ENCODE measurements at regions of chr10 and their contacts with region 1.

Region 1: DNA sequence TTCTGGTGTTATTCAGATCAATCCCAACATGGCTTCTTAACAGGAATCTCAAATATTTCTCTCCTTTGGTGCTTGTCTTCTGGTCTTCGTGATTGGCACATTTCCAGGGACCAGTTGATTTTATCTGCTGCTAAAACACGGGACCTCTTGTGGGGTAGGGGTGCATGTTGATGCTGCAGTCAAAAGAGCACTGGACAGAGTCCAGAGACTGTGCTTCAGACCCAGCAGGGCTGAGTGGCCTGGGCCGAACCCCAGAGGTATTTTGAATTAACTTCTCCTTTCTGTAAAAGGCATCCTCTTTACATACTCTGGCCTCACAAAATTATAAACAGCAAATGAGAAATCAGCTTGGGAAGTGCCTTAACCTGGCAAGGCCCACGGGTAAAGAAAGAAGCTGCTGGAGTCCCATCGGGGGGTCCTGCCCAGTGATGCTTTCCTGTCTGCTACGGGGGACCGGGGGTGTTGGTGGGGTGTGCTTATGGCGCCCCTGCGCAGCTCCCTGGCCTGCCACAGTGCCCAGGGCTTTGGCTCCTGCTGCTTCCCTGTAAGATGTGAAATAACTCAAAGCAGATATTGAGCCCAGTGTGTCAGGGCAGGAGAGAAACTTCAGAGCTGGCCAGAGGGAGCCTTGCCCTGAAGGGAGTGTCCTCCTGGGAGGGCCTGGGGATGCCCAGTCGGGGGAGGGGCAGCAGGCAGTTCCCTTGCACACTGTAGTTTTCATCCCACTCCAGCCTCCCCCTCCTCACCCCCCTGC is 230.5 kb downstream of the TCF7L2 start:
- DNase-seq: no peak
- ATAC-seq: no peak
- H3K4me3 ChIP-seq: no peak overlapping the region
- H3K27ac ChIP-seq: no peak overlapping the region
- H3K4me1 ChIP-seq: peaks cover 0 to 29% (median 4%) of the 10 kb centered on the region in 9 donors
- H3K27me3 ChIP-seq: no peaks in the 10 kb centered on the region
- CTCF ChIP-seq: no peak

Region 2: GRCh38 chr10:112689299-112690072 is 491.1 kb before region 1 on chr10:
- intact Hi-C with region 1: no loop called
- DNase-seq: peak; percentile 15 to 25
- ATAC-seq: peak in 2 of 8 donors; percentile 20 to 44
- H3K4me3 ChIP-seq: no peak overlapping the region
- H3K27ac ChIP-seq: no peak overlapping the region
- H3K4me1 ChIP-seq: no peaks in the 10 kb centered on the region
- H3K27me3 ChIP-seq: no peaks in the 10 kb centered on the region
- CTCF ChIP-seq: peak in 8 of 9 donors; percentile 12 to 57 (median 43)

Region 3: DNA sequence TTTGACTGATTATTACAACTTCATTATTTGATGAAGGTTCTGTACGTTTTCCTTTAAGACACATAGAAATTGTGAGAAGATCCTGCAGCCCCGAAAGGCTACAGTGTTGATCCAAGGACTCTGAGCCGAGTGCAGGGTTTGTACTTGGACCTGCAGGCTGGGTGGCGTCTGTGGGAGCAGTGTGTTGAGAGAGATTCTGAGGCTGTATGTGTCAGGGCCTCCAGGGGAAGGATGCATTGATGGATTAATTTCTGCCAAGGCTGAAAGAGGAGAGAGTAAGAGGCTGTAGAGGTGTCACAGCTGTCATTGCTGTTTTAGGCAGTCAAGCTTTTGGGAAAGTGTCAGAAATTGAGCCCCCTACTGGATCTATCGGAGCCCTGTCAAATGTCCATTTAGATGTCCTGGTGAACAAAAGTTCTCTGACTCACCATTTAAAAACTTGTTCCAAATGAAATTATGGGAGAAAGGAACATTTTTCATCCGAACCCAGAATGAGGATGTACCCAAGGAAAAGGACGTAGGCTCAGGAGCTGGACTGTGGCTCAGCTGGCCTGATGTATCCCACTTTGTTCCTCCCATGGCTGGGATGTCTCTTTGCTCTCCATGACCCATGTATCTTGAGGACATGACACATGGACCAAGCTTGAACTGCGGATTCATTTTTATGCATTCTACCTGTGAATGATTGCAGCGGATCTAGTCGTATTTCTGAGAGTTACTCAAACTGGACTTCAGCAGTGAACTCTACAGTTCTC is 128.3 kb before region 1 on chr10:
- intact Hi-C with region 1: no loop called
- DNase-seq: no peak
- ATAC-seq: peak in 4 of 8 donors; percentile 2 to 41 (median 26)
- H3K4me3 ChIP-seq: no peak overlapping the region
- H3K27ac ChIP-seq: peak overlapping the region in 1 of 10 donors; percentile 1
- H3K4me1 ChIP-seq: peaks cover 0 to 78% (median 45%) of the 10 kb centered on the region in 9 donors
- H3K27me3 ChIP-seq: no peaks in the 10 kb centered on the region
- CTCF ChIP-seq: peak in 8 of 9 donors; percentile 14 to 46 (median 26)

Region 4: DNA sequence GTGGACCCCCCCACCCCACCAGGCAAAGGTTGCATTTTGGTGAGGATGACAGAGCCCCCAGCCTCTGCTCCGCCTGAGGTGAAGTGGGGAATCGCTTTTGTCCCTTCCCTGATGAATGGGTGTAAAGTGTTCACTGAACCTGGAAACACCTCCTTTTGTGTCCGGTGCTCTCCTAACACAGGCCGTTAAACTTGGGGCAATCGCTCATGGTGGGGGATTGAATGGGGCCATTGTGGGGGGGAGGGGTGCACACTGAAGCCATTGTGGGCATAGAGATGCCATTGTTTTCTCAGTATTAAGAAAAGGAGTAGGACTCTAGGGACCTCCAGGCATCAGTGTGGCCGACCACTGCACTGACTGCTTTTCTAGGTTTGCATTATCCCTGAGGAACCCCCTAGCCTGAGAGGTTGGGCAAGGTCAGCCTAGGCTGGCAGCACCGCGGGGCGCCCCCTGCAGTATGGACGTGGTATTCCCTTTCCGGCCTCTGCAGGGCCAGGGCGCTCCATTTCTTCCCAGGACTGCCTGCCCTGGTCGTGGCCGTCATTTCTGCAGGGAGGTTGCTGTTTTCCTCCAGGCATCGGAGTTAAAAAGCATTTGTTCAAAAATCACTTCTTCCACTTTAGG is 72.3 kb before region 1 on chr10:
- intact Hi-C with region 1: no loop called
- DNase-seq: peak in 1 of 2 donors; percentile 35
- ATAC-seq: peak in 2 of 8 donors; percentile 29 to 33
- H3K4me3 ChIP-seq: no peak overlapping the region
- H3K27ac ChIP-seq: no peak overlapping the region
- H3K4me1 ChIP-seq: peaks cover 0 to 33% (median 7%) of the 10 kb centered on the region in 9 donors
- H3K27me3 ChIP-seq: no peaks in the 10 kb centered on the region
- CTCF ChIP-seq: peak in 8 of 9 donors; percentile 29 to 64 (median 51)

Region 5: GRCh38 chr10:113228530-113228929 is 48.0 kb after region 1 on chr10:
- intact Hi-C with region 1: loop called in 1 of 10 experiments (anchors 5 kb)
- DNase-seq: no peak
- ATAC-seq: no peak
- H3K4me3 ChIP-seq: no peak overlapping the region
- H3K27ac ChIP-seq: no peak overlapping the region
- H3K4me1 ChIP-seq: peaks cover 0 to 10% (median 0%) of the 10 kb centered on the region in 9 donors
- H3K27me3 ChIP-seq: peaks cover 0 to 12% (median 0%) of the 10 kb centered on the region in 7 donors
- CTCF ChIP-seq: no peak

Region 6: GRCh38 chr10:113239566-113240350 is 59.2 kb after region 1 on chr10:
- intact Hi-C with region 1: no loop called
- DNase-seq: no peak
- ATAC-seq: peak in 1 of 8 donors; percentile 66
- H3K4me3 ChIP-seq: no peak overlapping the region
- H3K27ac ChIP-seq: no peak overlapping the region
- H3K4me1 ChIP-seq: peaks cover 0 to 7% (median 0%) of the 10 kb centered on the region in 9 donors
- H3K27me3 ChIP-seq: no peaks in the 10 kb centered on the region
- CTCF ChIP-seq: no peak

Measured in heart right ventricle (tissue), 16 donors.